Naive thymus-derived CD4-positive, alpha-beta T cell (primary cell): ENCODE measurements at regions of chr1 and their contacts with region 1.

Region 1: DNA sequence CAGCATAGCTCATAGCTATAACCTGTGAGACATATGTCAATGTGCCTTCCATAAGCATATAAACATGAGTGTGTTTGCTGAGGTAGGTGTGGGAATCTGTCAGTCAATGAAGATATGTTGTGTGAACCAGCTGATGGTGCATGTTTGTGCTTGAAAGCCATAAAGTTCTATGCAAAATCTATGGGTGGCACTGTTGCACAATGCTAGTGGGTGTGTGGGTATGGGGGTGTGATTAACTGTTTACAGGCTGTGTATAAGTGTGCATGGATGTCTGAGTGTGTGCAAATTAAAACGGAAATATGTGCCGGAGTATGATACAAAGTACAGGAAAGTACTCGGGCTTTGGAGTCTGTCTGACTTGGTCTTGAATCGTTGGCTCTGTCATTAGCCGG is 1.0 kb upstream of the ATP2B4 start:
- DNase-seq: peak in 8 of 9 donors; percentile 54 to 88 (median 84)
- ATAC-seq: peak; percentile 82
- H3K4me3 ChIP-seq: peak overlapping the region; percentile 71
- H3K4me3 Mint-ChIP-seq: peak overlapping the region; percentile 89 to 100 (median 98)
- H3K27ac ChIP-seq: peak overlapping the region; percentile 82
- H3K27ac Mint-ChIP-seq: peak overlapping the region; percentile 73 to 98 (median 96)
- H3K4me1 ChIP-seq: peaks cover 17% of the 10 kb centered on the region in 2 donors
- H3K4me1 Mint-ChIP-seq: peaks cover 28 to 66% (median 37%) of the 10 kb centered on the region in 7 donors
- H3K27me3 ChIP-seq: no peaks in the 10 kb centered on the region
- H3K27me3 Mint-ChIP-seq: no peaks in the 10 kb centered on the region

Region 2: GRCh38 chr1:203290261-203291089 is 335.1 kb before region 1 on chr1:
- CTCF ChIA-PET with region 1: interaction called, 3 read pairs
- POLR2A ChIA-PET with region 1: interaction called, 3 read pairs
- intact Hi-C with region 1: loop called in 1 of 2 experiments (anchors 5 kb)
- DNase-seq: peak; percentile 95 to 98 (median 97)
- ATAC-seq: peak; percentile 76
- H3K4me3 ChIP-seq: peak overlapping the region; percentile 57
- H3K4me3 Mint-ChIP-seq: peak overlapping the region; percentile 75 to 89 (median 86)
- H3K27ac ChIP-seq: peak overlapping the region; percentile 98
- H3K27ac Mint-ChIP-seq: peak overlapping the region; percentile 97 to 100 (median 99)
- H3K4me1 ChIP-seq: peaks cover 54 to 58% of the 10 kb centered on the region in 2 donors
- H3K4me1 Mint-ChIP-seq: peaks cover 44 to 92% (median 86%) of the 10 kb centered on the region in 7 donors
- H3K27me3 ChIP-seq: no peaks in the 10 kb centered on the region
- H3K27me3 Mint-ChIP-seq: peaks cover 0 to 3% (median 0%) of the 10 kb centered on the region in 5 donors

Region 3: GRCh38 chr1:203340112-203340804 is 285.4 kb before region 1 on chr1:
- CTCF ChIA-PET with region 1: no interaction called
- POLR2A ChIA-PET with region 1: interaction called, 3 read pairs
- intact Hi-C with region 1: loop called in 1 of 2 experiments (anchors 1 kb)
- DNase-seq: peak in 7 of 9 donors; percentile 39 to 68 (median 62)
- ATAC-seq: peak; percentile 80
- H3K4me3 ChIP-seq: no peak overlapping the region
- H3K4me3 Mint-ChIP-seq: no peak overlapping the region
- H3K27ac ChIP-seq: no peak overlapping the region
- H3K27ac Mint-ChIP-seq: peak overlapping the region in 7 of 9 donors; percentile 1 to 75 (median 34)
- H3K4me1 ChIP-seq: peaks cover 9 to 18% of the 10 kb centered on the region in 2 donors
- H3K4me1 Mint-ChIP-seq: peaks cover 24 to 40% (median 34%) of the 10 kb centered on the region in 7 donors
- H3K27me3 ChIP-seq: no peaks in the 10 kb centered on the region
- H3K27me3 Mint-ChIP-seq: peaks cover 0 to 50% (median 6%) of the 10 kb centered on the region in 5 donors

Region 4: DNA sequence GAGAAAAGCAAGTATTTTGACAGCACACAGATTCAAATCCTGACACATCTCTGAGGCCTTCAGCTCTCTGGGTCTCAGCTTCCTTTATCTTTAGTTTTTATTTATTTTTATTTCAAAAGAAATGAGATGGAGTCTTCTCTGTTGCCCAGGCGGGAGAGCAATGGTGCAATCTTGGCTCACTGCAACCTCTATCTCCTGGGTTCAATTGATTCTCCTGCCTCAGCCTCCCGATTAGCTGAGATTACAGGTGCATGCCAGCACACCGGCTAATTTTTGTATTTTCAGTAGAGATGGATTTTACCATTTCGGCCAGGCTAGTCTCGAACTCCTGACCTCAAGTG is 18.1 kb before region 1 on chr1:
- CTCF ChIA-PET with region 1: interaction called, 9 read pairs
- POLR2A ChIA-PET with region 1: interaction called, 11 read pairs
- intact Hi-C with region 1: loop called (anchors 1 kb)
- DNase-seq: no peak
- ATAC-seq: no peak
- H3K4me3 ChIP-seq: no peak overlapping the region
- H3K4me3 Mint-ChIP-seq: peak overlapping the region in 5 of 10 donors; percentile 57 to 81 (median 72)
- H3K27ac ChIP-seq: no peak overlapping the region
- H3K27ac Mint-ChIP-seq: peak overlapping the region in 4 of 9 donors; percentile 51 to 93 (median 89)
- H3K4me1 ChIP-seq: peaks cover 11 to 21% of the 10 kb centered on the region in 2 donors
- H3K4me1 Mint-ChIP-seq: peaks cover 21 to 64% (median 33%) of the 10 kb centered on the region in 7 donors
- H3K27me3 ChIP-seq: no peaks in the 10 kb centered on the region
- H3K27me3 Mint-ChIP-seq: peaks cover 0 to 2% (median 0%) of the 10 kb centered on the region in 5 donors

Region 5: DNA sequence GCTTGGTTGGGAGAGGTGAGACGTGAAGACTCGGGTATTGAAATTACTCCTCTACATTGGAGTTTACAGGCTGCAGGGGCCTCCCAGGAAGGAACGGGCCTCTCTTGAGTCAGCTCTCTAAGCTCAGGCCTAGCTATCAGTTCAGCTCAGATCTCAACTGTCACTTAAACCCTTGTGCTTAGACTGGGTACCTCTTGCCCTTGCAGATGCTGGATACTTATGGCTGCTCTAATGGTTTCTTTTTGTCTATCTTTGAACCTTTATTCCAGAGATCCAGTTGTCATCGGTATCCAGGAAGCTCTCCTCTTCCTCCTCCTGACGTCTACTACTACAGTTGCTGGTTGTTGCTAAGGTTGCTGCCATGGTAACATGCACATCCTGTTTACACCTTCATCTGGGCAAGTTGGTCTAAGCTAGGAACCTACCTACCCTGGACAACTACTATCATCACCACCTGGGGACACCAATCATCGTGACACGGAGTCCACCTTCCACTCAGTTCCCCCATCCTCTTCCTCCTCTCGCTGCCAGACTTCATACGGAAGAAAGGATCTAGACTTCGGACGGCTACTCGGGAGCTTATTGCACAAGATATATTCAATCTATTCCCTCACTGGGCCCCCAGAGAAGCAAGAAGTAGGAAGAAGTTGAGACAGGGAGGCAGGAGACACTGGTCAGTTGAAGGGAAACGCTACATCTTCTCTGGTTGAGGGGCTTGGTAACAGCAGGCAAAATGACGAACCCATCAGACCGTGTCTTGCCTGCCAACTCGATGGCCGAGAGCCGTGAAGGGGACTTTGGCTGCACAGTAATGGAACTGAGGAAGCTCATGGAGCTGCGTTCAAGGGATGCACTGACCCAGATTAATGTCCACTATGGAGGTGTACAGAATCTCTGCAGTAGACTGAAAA is 57.1 kb after region 1 on chr1:
- CTCF ChIA-PET with region 1: interaction called, 10 read pairs
- POLR2A ChIA-PET with region 1: interaction called, 48 read pairs
- intact Hi-C with region 1: loop called (anchors 1 kb)
- DNase-seq: peak; percentile 26 to 89 (median 80)
- ATAC-seq: peak; percentile 97
- H3K4me3 ChIP-seq: no peak overlapping the region
- H3K4me3 Mint-ChIP-seq: peak overlapping the region; percentile 19 to 72 (median 54)
- H3K27ac ChIP-seq: peak overlapping the region; percentile 67
- H3K27ac Mint-ChIP-seq: peak overlapping the region; percentile 82 to 96 (median 95)
- H3K4me1 ChIP-seq: peaks cover 24 to 26% of the 10 kb centered on the region in 2 donors
- H3K4me1 Mint-ChIP-seq: peaks cover 32 to 57% (median 51%) of the 10 kb centered on the region in 7 donors
- H3K27me3 ChIP-seq: no peaks in the 10 kb centered on the region
- H3K27me3 Mint-ChIP-seq: no peaks in the 10 kb centered on the region

Region 6: GRCh38 chr1:203795441-203796235 is 170.0 kb after region 1 on chr1 and contains the starts of genes ZBED6 and ZC3H11A:
- CTCF ChIA-PET with region 1: no interaction called
- POLR2A ChIA-PET with region 1: no interaction called
- intact Hi-C with region 1: loop called (anchors 1 kb)
- DNase-seq: peak; percentile 85 to 100 (median 97)
- ATAC-seq: peak; percentile 99
- H3K4me3 ChIP-seq: peak within 1 kb of the TSS; percentile 80
- H3K4me3 Mint-ChIP-seq: peak within 1 kb of the TSS; percentile 94 to 98 (median 96)
- H3K27ac ChIP-seq: peak within 1 kb of the TSS; percentile 80
- H3K27ac Mint-ChIP-seq: peak within 1 kb of the TSS; percentile 82 to 98 (median 96)
- H3K4me1 ChIP-seq: peaks cover 35 to 36% of the 10 kb centered on the region in 2 donors
- H3K4me1 Mint-ChIP-seq: peaks cover 18 to 55% (median 48%) of the 10 kb centered on the region in 7 donors
- H3K27me3 ChIP-seq: no peaks in the 10 kb centered on the region
- H3K27me3 Mint-ChIP-seq: no peaks in the 10 kb centered on the region
- total RNA-seq, gene ZBED6: 23.8 to 36.1 (median 31.9) TPM
- total RNA-seq, gene ZC3H11A: 70.9 to 138 (median 91.6) TPM

Region 7: DNA sequence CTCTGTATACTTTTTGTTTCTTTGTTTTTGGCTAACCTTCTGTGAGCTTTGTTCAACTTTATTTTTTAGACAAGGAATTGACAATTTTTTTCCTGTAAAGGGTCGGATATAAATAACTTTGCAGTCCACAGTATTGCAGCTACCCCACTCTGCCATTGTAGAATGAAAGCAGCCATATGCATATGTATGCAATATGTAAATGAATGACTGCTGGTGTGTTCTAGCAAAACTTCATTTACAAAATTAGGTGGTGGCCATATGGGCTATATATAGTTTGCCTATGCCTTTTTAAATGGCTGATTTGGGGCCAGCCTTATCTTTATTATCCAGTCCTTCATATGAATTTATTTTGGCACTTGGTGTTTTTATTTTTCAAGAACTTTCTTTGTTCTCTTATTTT is 217.8 kb after region 1 on chr1:
- CTCF ChIA-PET with region 1: no interaction called
- POLR2A ChIA-PET with region 1: no interaction called
- intact Hi-C with region 1: no loop called
- DNase-seq: no peak
- ATAC-seq: no peak
- H3K4me3 ChIP-seq: no peak overlapping the region
- H3K4me3 Mint-ChIP-seq: no peak overlapping the region
- H3K27ac ChIP-seq: no peak overlapping the region
- H3K27ac Mint-ChIP-seq: peak overlapping the region in 2 of 9 donors; percentile 33 to 70
- H3K4me1 ChIP-seq: no peaks in the 10 kb centered on the region
- H3K4me1 Mint-ChIP-seq: peaks cover 0 to 6% (median 0%) of the 10 kb centered on the region in 7 donors
- H3K27me3 ChIP-seq: no peaks in the 10 kb centered on the region
- H3K27me3 Mint-ChIP-seq: no peaks in the 10 kb centered on the region

Region 8: GRCh38 chr1:203906932-203907331 is 281.3 kb after region 1 on chr1:
- CTCF ChIA-PET with region 1: no interaction called
- POLR2A ChIA-PET with region 1: no interaction called
- intact Hi-C with region 1: no loop called
- DNase-seq: no peak
- ATAC-seq: no peak
- H3K4me3 ChIP-seq: no peak overlapping the region
- H3K4me3 Mint-ChIP-seq: no peak overlapping the region
- H3K27ac ChIP-seq: no peak overlapping the region
- H3K27ac Mint-ChIP-seq: no peak overlapping the region
- H3K4me1 ChIP-seq: no peaks in the 10 kb centered on the region
- H3K4me1 Mint-ChIP-seq: no peaks in the 10 kb centered on the region
- H3K27me3 ChIP-seq: no peaks in the 10 kb centered on the region
- H3K27me3 Mint-ChIP-seq: peaks cover 0 to 6% (median 4%) of the 10 kb centered on the region in 5 donors

Region 9: GRCh38 chr1:204506961-204507387 is 881.4 kb after region 1 on chr1:
- CTCF ChIA-PET with region 1: no interaction called
- POLR2A ChIA-PET with region 1: no interaction called
- intact Hi-C with region 1: loop called in 1 of 2 experiments (anchors 5 kb)
- DNase-seq: peak; percentile 57 to 96 (median 93)
- ATAC-seq: peak; percentile 83
- H3K4me3 ChIP-seq: peak overlapping the region; percentile 66
- H3K4me3 Mint-ChIP-seq: peak overlapping the region; percentile 81 to 98 (median 94)
- H3K27ac ChIP-seq: peak overlapping the region; percentile 90
- H3K27ac Mint-ChIP-seq: peak overlapping the region; percentile 95 to 100 (median 99)
- H3K4me1 ChIP-seq: peaks cover 11 to 20% of the 10 kb centered on the region in 2 donors
- H3K4me1 Mint-ChIP-seq: peaks cover 19 to 57% (median 44%) of the 10 kb centered on the region in 7 donors
- H3K27me3 ChIP-seq: no peaks in the 10 kb centered on the region
- H3K27me3 Mint-ChIP-seq: peaks cover 0 to 6% (median 4%) of the 10 kb centered on the region in 5 donors